Head of caudate nucleus (tissue), 42 donors: ENCODE measurements at regions of chr7 and their contacts with region 1.

Region 1: DNA sequence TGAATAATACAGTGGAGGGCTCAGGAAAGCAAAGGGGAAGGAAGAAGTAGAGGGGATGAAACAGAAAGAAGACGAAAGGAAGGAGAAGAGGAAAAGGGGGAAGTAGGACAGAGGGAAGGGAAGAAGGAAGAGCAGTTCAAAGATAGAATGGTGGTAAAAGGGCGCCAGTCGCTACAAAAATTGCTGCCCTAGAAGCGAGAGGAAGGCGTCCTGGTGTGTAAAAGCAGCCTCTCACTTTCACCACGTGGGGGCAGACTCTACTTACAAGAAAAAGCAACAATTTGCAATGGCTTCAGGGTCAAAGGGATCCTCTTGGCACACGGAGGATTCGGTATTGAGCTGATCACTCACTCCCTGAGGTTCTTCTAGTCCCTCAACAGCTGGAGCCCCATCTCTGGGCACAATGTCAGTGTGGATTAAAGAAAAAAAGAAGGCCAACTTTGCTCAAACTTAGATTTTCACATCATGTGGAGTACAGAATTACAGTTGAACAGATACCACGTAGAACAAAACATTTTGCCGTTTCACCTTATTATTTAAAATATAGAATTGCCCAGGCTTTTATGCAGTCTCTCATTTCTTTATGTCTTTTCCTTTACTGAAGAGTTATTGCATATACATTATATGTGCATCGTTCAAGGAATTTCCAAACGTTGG is 31.4 kb upstream of the NPVF start:
- DNase-seq: peak in 41 of 42 donors; percentile 38 to 91 (median 72)

Region 2: GRCh38 chr7:25215694-25216335 is 43.9 kb before region 1 on chr7:
- intact Hi-C with region 1: no loop called
- DNase-seq: no peak

Region 3: GRCh38 chr7:25565949-25566348 is 306.2 kb after region 1 on chr7:
- intact Hi-C with region 1: loop called (anchors 5 kb)
- DNase-seq: peak in 41 of 42 donors; percentile 35 to 88 (median 66)